OCI-LY7 (cell line): ENCODE measurements at regions of chr12 and their contacts with region 1.

Region 1: GRCh38 chr12:104291867-104292524 is 11.5 kb upstream of the EID3 start:
- DNase-seq: no peak
- H3K4me3 ChIP-seq: no peak overlapping the region
- H3K27ac ChIP-seq: no peak overlapping the region
- H3K4me1 ChIP-seq: peaks cover 8% of the 10 kb centered on the region
- CTCF ChIP-seq: no peak

Region 2: GRCh38 chr12:103897316-103897715 is 394.7 kb before region 1 on chr12:
- CTCF ChIA-PET with region 1: no interaction called
- POLR2A ChIA-PET with region 1: interaction called, 10 read pairs
- intact Hi-C with region 1: no loop called
- DNase-seq: no peak
- H3K4me3 ChIP-seq: no peak overlapping the region
- H3K27ac ChIP-seq: no peak overlapping the region
- H3K4me1 ChIP-seq: no peaks in the 10 kb centered on the region
- CTCF ChIP-seq: no peak

Region 3: DNA sequence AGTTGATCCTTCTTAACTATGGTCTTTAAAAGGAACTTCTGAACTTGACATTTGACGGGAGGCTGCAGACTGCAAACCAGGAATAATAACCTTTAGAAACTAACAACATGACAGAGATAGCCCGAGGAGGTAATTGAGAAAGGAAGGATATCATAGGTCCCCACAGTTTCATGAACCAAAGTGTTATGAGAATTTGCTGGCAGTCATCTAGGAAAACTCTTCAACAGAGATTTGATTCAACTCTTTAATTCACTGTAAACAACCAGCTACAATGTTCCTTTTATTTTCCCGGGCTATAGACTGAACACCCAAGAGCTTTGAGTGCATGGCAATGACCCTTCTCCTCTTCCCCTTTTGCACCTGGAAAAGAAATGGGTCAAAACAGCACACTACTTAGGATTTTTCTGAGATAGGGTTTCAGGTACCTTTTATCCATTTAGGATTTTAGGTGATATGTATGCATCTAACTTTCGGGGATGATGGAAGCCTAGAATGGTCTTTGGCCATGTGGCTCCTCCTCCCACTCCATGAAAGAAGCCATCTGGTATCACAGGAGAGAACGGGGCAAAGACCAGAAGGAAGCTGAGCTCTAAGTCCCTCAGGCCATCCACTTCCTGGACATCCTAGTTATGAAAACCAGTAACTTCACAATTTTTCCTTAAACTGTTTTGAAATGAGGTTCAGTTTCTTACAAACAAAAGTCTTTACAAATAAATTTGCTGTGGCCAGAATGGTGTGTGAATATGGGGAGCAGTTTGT is 265.0 kb before region 1 on chr12:
- CTCF ChIA-PET with region 1: no interaction called
- POLR2A ChIA-PET with region 1: no interaction called
- intact Hi-C with region 1: no loop called
- DNase-seq: no peak
- H3K4me3 ChIP-seq: no peak overlapping the region
- H3K27ac ChIP-seq: no peak overlapping the region
- H3K4me1 ChIP-seq: no peaks in the 10 kb centered on the region
- CTCF ChIP-seq: no peak

Region 4: DNA sequence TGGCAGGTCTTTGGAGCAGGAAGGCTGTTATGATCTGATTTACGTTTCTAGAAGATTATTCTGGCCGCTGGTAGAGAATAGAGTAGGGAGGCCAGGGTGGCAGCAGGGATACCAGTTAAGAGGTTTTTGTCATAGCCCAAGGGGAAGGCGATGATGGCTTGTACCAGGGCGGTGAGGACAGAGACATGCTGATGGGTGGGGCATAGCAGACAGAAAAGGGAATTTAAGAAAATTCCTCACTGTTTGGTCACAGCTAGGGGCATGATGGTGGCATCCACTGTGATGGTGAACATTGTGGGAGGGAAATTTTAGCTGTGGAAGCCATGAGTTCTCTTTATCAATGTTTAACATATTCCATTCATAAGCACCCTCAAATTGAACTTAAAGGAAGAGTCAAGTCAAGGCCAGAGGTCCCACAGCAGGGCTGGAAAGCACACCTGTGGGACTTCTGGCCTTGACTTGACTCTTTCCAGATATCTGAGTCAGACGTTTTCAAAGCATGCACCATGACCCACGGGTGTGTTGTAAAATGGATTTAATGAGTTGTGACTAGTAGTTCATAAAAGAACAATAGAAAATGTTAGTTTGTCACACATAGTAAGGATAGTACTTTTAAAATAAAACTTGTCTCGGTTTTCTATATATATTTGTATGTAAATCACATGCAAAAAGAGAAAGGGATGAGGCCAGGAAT is 299.4 kb after region 1 on chr12:
- CTCF ChIA-PET with region 1: no interaction called
- POLR2A ChIA-PET with region 1: no interaction called
- intact Hi-C with region 1: no loop called
- DNase-seq: no peak
- H3K4me3 ChIP-seq: no peak overlapping the region
- H3K27ac ChIP-seq: no peak overlapping the region
- H3K4me1 ChIP-seq: peaks cover 53% of the 10 kb centered on the region
- CTCF ChIP-seq: no peak